ENCODE measurements at regions of chr1 and their contacts with region 1.

Region 1: GRCh38 chr1:109783429-109783831 is 19.7 kb upstream of the EPS8L3 start:
- DNase-seq: peak; percentile 76
- ATAC-seq: peak; percentile 47
- H3K4me3 ChIP-seq: no peak overlapping the region
- H3K27ac ChIP-seq: peak overlapping the region; percentile 30
- H3K4me1 ChIP-seq: peaks cover 27% of the 10 kb centered on the region
- H3K27me3 ChIP-seq: no peaks in the 10 kb centered on the region
- CTCF ChIP-seq: no peak
- POLR2A ChIP-seq: no peak
- RAD21 ChIP-seq: no peak

Region 2: DNA sequence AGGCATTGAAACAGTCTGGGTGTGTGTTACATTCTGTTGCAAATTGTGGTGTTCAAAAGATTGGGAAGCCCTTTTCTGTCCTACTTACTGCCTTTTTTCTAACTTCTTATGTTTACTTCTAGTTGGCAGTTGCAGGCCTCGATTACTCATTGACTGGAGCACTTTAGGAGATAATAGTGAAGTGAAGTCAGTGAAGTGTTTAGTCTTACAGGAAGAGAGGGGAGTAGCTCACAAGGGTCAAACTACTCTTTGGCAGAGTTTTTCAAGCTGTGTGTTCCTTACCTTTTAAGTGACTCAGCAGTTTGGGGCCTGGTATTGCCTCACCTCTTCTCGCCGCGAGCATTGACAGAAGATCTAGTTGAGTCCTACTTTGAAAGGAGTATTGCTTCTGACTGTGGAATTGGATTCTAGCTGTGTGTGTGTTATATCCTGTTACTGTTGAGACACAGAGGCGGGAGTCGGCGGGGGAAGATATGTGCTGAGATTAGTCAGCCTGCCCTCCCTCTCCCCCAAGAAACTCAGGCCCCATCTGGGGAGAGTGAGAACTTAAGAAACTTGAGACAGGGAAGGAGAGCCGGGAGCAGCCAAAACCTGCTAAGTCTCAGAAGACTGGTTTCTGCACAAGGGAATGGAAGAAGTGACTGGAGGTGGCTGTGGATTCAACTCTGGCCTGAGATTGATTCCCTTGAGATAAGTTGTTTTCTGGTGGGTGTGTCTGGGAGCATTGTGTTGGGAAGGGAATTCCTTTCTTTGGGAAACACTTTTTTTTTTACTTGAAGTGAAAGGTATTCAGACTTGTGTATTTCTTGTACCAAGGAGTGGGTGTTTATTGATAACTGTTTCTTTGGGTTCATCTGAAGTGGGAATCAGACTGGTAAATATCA is 220.6 kb after region 1 on chr1:
- CTCF ChIA-PET with region 1: no interaction called
- POLR2A ChIA-PET with region 1: no interaction called
- dilution Hi-C with region 1: no loop called
- in situ Hi-C with region 1: no loop called
- intact Hi-C with region 1: loop called (anchors 2 kb)
- DNase-seq: peak; percentile 99
- ATAC-seq: peak; percentile 90
- H3K4me3 ChIP-seq: peak overlapping the region; percentile 29; the same call in 1 of the 2 replicates
- H3K27ac ChIP-seq: peak overlapping the region; percentile 50
- H3K4me1 ChIP-seq: peaks cover 17% of the 10 kb centered on the region
- H3K27me3 ChIP-seq: no peaks in the 10 kb centered on the region
- CTCF ChIP-seq: no peak
- POLR2A ChIP-seq: peak; percentile 67
- RAD21 ChIP-seq: no peak